ENCODE measurements at regions of chr4 and their contacts with region 1.

Region 1: DNA sequence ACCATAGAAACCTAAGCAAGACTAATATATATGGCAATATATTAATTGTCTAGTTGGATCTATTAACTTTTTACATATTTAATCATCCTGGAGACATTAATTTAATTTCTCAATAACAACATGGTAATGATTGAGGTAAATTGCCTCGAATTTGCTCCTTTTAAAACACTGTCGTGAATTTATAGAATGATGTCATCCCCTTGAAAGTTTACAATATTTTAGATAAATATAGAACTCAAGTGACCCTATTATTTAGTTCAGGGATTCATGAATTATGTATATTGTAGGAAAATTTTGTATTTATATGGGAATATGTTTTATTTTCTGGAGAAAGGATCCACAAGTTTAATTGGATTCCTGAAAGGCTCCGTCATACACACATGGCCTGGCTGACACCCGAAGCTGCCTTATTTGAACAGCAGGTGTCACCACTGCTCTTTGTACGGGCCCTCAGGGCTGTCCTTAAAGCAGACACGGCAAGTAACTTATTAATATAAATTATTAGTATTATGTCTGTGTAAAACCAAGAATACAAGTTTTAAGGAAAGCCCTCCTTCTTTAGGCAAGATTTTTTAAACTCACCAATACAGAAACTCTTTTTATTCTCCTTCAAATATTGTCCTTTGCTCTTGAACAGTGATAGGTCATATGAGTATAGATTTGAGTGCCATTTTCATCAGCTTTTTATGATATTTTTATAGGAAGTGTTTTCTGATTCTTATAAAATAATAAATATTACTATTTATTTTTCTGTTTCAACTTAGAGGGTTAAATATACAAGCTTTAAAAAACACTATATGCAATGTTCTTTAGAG is 1.9 kb upstream of the PLRG1 start:
- DNase-seq: peak; percentile 82
- H3K4me3 Mint-ChIP-seq: no peak overlapping the region
- H3K27ac Mint-ChIP-seq: no peak overlapping the region
- H3K4me1 Mint-ChIP-seq: peaks cover 13% of the 10 kb centered on the region
- H3K27me3 Mint-ChIP-seq: no peaks in the 10 kb centered on the region
- CTCF ChIP-seq: peak; percentile 80

Region 2: DNA sequence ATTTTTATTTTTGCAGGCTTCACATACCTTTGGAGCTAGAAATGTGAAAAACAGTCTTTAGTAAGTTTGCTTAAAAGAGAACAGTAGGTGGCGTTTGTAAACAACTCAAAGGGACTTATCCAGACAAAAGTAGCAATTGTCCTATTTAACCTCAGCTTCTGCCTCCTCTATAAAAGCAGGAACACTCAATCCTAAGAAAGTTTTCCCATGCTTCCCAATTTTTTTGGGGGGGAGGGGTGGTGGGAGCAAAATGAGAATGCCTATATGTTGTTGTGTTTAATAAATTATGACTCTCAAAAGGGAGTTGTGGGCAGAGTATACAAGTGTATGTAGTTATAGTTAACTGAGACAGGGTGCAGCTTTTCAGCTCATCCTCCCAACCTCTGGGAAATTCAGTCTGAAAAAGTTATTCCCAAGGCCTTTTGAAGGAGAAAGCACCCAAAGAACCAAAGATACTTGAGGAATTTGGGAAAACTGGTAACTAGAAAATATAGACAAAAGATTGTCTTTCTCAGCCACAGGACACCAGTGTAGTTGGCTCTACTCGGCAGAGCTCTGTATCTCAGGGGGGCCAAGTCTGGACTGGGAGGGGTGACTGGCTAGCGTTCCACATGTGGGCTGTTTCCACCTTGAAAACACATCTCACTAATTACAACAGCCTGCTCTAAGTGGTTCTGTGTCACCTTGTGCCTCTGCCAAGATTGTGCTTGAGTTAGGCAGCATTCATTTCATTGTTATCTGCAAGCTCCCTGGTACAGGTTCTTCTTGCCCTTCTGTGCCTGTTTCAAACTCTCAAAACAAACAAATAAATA is 766.0 kb before region 1 on chr4:
- CTCF ChIA-PET with region 1: interaction called, 5 read pairs
- POLR2A ChIA-PET with region 1: no interaction called
- intact Hi-C with region 1: loop called (anchors 5 kb)
- DNase-seq: peak; percentile 49
- H3K4me3 Mint-ChIP-seq: no peak overlapping the region
- H3K27ac Mint-ChIP-seq: no peak overlapping the region
- H3K4me1 Mint-ChIP-seq: peaks cover 13% of the 10 kb centered on the region
- H3K27me3 Mint-ChIP-seq: no peaks in the 10 kb centered on the region
- CTCF ChIP-seq: peak; percentile 47

Region 3: GRCh38 chr4:154529728-154530519 is 22.2 kb before region 1 on chr4:
- CTCF ChIA-PET with region 1: interaction called, 15 read pairs
- POLR2A ChIA-PET with region 1: interaction called, 50 read pairs
- intact Hi-C with region 1: no loop called
- DNase-seq: peak; percentile 83
- H3K4me3 Mint-ChIP-seq: no peak overlapping the region
- H3K27ac Mint-ChIP-seq: no peak overlapping the region
- H3K4me1 Mint-ChIP-seq: peaks cover 14% of the 10 kb centered on the region
- H3K27me3 Mint-ChIP-seq: no peaks in the 10 kb centered on the region
- CTCF ChIP-seq: no peak

Region 4: DNA sequence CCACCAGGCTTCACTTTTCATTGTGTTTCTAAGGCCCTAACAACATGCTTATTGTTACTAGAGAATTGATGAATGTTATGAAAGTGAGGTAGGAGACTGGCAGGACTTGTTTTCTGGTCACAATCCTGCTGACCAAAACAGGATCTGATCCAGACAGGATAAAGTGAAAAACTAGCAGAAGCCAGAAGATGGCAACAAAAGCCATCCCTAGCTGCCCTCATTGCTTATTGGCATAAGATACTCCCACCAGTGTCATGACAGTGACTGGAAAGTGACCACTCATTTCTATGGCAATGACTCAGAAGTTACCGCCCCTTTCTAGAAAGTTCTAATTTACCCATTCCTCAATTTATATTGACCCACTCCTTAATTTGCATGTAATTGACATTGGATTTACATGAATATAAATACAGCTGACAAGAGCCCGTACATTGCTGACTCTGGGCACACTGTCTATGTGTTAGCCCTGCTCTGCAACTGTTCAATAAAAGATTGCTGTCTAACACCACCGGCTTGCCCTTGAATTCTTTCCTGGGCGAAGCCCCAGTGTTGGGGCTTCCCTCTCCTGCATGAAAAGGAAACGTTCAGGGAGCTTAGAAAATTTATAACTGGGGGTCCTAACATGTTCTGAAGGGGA is 90.4 kb after region 1 on chr4:
- CTCF ChIA-PET with region 1: interaction called, 10 read pairs
- POLR2A ChIA-PET with region 1: interaction called, 5 read pairs
- intact Hi-C with region 1: no loop called
- DNase-seq: no peak
- H3K4me3 Mint-ChIP-seq: no peak overlapping the region
- H3K27ac Mint-ChIP-seq: no peak overlapping the region
- H3K4me1 Mint-ChIP-seq: peaks cover 14% of the 10 kb centered on the region
- H3K27me3 Mint-ChIP-seq: no peaks in the 10 kb centered on the region
- CTCF ChIP-seq: no peak

Region 5: GRCh38 chr4:154911097-154911496 is 359.0 kb after region 1 on chr4:
- CTCF ChIA-PET with region 1: no interaction called
- POLR2A ChIA-PET with region 1: no interaction called
- intact Hi-C with region 1: loop called (anchors 10 kb)
- DNase-seq: peak; percentile 23
- H3K4me3 Mint-ChIP-seq: no peak overlapping the region
- H3K27ac Mint-ChIP-seq: no peak overlapping the region
- H3K4me1 Mint-ChIP-seq: peaks cover 14% of the 10 kb centered on the region
- H3K27me3 Mint-ChIP-seq: no peaks in the 10 kb centered on the region
- CTCF ChIP-seq: no peak

Measured in MCF 10A (cell line).